ENCODE measurements at regions of chr15 and their contacts with region 1.

Region 1: DNA sequence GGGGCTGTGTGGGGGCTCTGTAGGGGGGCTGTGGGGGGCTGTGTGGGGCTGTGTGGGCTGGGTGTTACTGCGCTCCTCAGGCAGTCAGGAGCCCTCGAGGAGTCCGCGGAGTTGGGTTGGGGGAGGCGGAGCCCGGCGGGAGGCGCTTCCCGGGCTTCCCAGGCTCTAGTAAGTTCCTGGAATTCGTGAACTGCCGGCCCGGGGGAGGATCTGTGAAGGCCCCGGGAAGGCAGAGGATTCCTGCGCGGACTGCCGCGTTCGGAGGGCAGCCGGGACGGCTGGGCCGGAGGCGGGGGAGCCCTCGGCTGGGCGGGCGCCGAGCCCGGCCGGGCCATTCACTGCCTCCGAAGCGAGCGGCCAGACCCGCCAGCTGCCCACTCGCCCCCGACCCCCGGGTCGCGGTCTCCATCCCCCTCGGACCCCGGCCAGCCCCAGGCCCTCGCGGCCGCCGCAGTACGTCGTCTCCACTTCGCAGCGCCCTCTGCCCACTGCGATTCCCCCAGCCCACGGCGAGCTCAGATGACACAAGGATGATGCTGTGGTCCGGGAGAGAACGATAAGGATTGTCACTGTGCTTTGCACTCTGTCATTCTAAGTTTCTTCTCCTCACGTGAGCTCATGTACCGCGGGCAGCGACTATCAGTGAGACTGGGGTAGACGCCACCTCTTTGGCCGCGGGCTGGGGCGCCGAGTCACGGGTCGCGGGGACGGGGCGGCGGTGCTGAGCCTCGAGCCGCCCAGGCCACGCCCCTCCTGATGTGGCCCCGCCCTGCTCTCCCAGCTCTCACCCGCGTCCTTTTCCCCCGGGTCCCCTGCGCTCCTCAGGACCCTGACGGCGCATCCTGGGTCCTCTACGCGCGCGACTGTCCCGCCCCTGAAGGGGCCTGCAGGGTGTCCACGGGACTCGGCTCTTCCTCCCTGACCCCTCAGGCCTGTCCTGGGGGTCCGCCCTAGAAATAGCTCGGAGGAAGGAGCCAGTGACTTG is 65.3 kb downstream of the KLF13 start:
- DNase-seq: peak; percentile 87 to 92
- ATAC-seq: peak; percentile 79 to 87 (median 84)
- H3K4me3 ChIP-seq: peak overlapping the region; percentile 51 to 74 (median 68)
- H3K27ac ChIP-seq: peak overlapping the region; percentile 89 to 99 (median 98)
- H3K4me1 ChIP-seq: peaks cover 0 to 39% (median 28%) of the 10 kb centered on the region in 9 donors
- H3K27me3 ChIP-seq: peaks cover 0 to 11% (median 0%) of the 10 kb centered on the region in 7 donors
- CTCF ChIP-seq: no peak

Region 2: DNA sequence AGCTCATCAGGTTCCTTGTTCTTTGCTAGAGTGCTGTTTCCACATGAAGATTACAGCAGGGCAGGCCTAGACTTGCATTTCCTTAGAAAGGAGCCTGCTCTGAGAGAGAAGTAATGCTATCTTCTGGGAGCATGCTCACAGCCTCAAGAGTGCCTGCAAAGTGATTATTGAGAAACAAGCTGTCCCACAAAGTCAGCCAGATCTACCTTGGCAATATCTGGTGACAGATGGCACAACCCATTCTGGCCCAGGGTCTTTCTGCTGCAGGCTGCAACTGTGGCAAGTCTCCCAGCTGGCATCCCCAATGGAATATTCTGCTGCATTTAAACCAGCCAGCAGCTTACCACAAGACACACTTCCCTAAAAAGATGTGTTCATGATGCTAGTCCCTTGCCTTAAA is 429.9 kb before region 1 on chr15:
- intact Hi-C with region 1: no loop called
- DNase-seq: no peak
- ATAC-seq: peak in 5 of 8 donors; percentile 20 to 69 (median 42)
- H3K4me3 ChIP-seq: no peak overlapping the region
- H3K27ac ChIP-seq: peak overlapping the region in 2 of 10 donors; percentile 2 to 19
- H3K4me1 ChIP-seq: peaks cover 0 to 18% (median 14%) of the 10 kb centered on the region in 9 donors
- H3K27me3 ChIP-seq: no peaks in the 10 kb centered on the region
- CTCF ChIP-seq: no peak

Region 3: DNA sequence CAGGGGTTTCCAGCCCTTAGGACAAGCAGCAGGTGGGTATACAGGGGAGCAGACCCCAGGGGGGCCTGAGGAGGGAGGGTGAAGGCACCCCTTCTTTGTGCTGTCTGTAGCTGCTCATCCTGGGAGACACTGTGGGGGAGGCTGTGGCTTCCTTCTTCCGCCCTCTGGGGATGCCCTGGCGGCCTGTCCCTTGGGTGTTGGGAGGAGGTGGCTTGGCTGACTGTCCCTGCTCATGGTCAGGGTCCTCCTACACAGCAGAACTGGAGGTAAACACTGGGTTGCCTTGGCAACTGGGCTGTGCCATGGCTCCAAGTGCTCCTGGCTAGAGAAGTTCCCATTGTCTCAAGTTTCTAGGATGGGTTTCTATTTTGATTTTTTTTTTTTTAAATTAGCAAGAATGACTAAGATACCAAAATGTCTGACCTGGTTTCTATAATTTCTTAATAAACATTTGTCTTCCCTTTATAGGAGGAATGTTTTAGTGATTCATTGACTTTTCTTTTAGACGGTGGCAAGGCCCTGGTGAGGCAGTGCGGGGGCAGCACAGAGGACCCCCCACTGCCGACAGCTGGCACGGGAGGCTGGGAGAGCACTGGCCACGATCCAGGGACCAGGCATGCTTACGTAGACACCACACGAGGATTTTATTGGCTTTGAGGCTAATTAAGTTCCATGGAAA is 53.0 kb before region 1 on chr15:
- intact Hi-C with region 1: loop called in 1 of 10 experiments (anchors 10 kb)
- DNase-seq: peak; percentile 80 to 88
- ATAC-seq: peak; percentile 43 to 86 (median 80)
- H3K4me3 ChIP-seq: peak overlapping the region in 4 of 10 donors; percentile 5 to 25 (median 15)
- H3K27ac ChIP-seq: peak overlapping the region; percentile 30 to 100 (median 80)
- H3K4me1 ChIP-seq: peaks cover 76 to 99% (median 99%) of the 10 kb centered on the region in 9 donors
- H3K27me3 ChIP-seq: no peaks in the 10 kb centered on the region
- CTCF ChIP-seq: no peak

Measured in heart right ventricle (tissue), 16 donors.